MCF 10A (cell line): ENCODE measurements at regions of chr4 and their contacts with region 1.

Region 1: DNA sequence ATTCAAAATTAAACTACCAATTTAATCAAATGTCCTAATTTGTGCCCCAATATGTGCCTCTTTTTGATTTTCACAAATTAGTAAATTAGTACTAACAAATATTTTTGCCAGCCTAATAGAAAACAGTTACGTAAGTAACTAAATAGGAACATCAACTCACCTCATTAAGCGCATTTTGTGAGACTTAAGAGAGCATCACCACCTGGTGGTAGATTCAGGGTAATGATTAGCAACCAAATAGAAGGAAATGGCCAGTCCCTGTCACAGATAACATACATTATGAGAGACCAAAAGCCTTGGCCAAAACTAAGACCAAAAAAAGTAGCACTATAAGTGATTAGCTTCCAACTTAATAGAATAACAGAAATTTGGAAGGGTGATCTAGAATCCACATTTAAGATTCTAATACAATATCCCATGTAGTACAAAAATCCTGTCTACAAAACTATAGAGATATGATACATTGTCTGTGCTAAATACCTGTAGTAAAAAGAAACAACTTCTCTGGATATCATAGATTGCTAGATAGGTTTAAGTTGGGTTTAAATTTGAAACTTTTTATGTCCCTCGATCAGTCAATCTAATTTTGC is 46.7 kb downstream of the C4orf46 start:
- DNase-seq: peak; percentile 79
- H3K4me3 Mint-ChIP-seq: no peak overlapping the region
- H3K27ac Mint-ChIP-seq: no peak overlapping the region
- H3K4me1 Mint-ChIP-seq: peaks cover 6% of the 10 kb centered on the region
- H3K27me3 Mint-ChIP-seq: no peaks in the 10 kb centered on the region
- CTCF ChIP-seq: peak; percentile 72

Region 2: GRCh38 chr4:157992038-157992705 is 632.8 kb before region 1 on chr4:
- CTCF ChIA-PET with region 1: no interaction called
- POLR2A ChIA-PET with region 1: no interaction called
- intact Hi-C with region 1: loop called (anchors 5 kb)
- DNase-seq: peak; percentile 79
- H3K4me3 Mint-ChIP-seq: no peak overlapping the region
- H3K27ac Mint-ChIP-seq: no peak overlapping the region
- H3K4me1 Mint-ChIP-seq: no peaks in the 10 kb centered on the region
- H3K27me3 Mint-ChIP-seq: no peaks in the 10 kb centered on the region
- CTCF ChIP-seq: peak; percentile 72

Region 3: DNA sequence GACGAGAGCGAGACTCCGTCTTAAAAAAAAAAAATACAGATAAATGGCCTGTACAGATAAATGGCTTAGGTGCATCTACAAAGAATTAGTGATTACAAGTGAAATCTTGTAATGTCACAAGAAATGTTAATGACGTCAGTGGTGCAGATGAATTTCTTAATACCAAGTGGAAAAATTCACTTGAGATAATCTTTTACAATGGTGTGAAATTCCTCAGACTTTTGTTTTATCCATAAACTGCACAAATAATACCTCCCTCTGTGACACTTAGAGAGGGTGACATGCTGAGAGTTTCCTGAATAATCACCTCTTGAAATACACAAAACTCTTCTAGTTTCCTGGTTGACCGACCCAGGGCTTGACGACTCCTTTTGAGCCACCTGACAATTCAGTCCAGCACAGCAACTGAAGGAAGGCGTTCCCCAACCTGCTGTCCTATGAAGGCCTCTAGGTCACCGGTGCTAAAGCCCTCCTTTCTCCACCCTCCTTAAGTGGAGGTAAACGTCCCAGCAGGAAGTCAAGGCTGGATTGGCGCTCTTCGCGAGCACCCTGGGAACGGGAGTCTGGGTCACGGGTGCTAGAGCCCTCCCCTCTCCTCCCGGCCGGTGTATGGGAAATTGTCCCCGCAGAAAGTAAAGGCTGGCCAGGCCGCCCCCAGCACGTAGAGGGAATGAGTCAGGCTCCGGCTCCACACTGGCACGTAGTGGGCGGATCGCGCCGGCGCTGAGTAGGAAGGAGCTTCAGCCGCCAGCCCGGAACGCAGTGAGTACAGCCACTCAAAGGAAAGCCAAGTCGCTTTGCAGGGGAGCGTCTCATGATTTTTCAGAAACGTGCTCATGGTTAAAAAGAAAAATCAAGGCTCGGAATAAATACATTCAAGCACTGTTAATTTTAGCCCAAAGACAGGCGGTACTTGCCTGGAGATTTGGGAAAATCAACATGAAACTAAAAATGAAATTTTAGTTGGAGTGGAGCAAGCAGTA is 414.9 kb before region 1 on chr4 and contains the start of gene TMEM144:
- CTCF ChIA-PET with region 1: no interaction called
- POLR2A ChIA-PET with region 1: no interaction called
- intact Hi-C with region 1: no loop called
- DNase-seq: peak; percentile 93
- H3K4me3 Mint-ChIP-seq: peak within 1 kb of the TSS; percentile 81
- H3K27ac Mint-ChIP-seq: peak within 1 kb of the TSS; percentile 82
- H3K4me1 Mint-ChIP-seq: no peaks in the 10 kb centered on the region
- H3K27me3 Mint-ChIP-seq: no peaks in the 10 kb centered on the region
- CTCF ChIP-seq: no peak
- total RNA-seq, gene TMEM144: 4.4 and 6.4 TPM in 2 replicates

Region 4: DNA sequence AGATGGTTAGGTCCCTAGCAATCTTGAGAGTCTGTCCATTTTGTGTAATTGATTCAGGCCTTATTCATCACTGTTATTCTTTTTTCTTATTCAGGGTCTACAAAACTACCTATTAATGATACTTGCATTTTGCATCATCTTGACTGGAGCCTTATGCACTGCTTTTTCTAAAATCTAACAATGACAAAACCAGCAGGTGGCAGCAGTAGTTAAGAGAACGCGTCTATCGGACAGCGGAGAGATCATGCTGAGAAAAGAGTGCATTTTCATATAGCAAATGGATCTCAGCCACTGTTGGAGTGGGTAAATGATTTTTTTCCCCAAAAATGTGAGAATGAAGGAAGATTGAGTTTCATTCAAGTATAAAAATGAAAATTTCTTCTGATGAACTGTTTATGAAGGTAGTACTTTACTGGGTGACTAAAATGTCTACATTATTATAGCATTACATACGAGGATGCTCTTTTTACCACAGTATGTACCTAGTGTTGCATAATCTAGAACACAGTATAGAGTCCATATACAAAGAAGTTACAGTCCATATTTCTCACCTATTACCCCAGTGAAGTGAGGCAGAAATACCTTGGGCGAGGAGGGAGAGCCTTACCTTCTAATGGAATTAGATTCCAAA is 371.5 kb before region 1 on chr4:
- CTCF ChIA-PET with region 1: interaction called, 76 read pairs
- POLR2A ChIA-PET with region 1: interaction called, 3 read pairs
- intact Hi-C with region 1: loop called (anchors 2 kb)
- DNase-seq: peak; percentile 72
- H3K4me3 Mint-ChIP-seq: no peak overlapping the region
- H3K27ac Mint-ChIP-seq: no peak overlapping the region
- H3K4me1 Mint-ChIP-seq: no peaks in the 10 kb centered on the region
- H3K27me3 Mint-ChIP-seq: no peaks in the 10 kb centered on the region
- CTCF ChIP-seq: peak; percentile 62

Region 5: GRCh38 chr4:158302076-158302866 is 322.7 kb before region 1 on chr4:
- CTCF ChIA-PET with region 1: interaction called, 10 read pairs
- POLR2A ChIA-PET with region 1: no interaction called
- intact Hi-C with region 1: no loop called
- DNase-seq: peak; percentile 69
- H3K4me3 Mint-ChIP-seq: no peak overlapping the region
- H3K27ac Mint-ChIP-seq: peak overlapping the region; percentile 84
- H3K4me1 Mint-ChIP-seq: peaks cover 42% of the 10 kb centered on the region
- H3K27me3 Mint-ChIP-seq: no peaks in the 10 kb centered on the region
- CTCF ChIP-seq: no peak

Region 6: GRCh38 chr4:158578476-158578875 is 46.5 kb before region 1 on chr4:
- CTCF ChIA-PET with region 1: interaction called, 4 read pairs
- POLR2A ChIA-PET with region 1: no interaction called
- intact Hi-C with region 1: loop called (anchors 1 kb)
- DNase-seq: peak; percentile 55
- H3K4me3 Mint-ChIP-seq: no peak overlapping the region
- H3K27ac Mint-ChIP-seq: peak overlapping the region; percentile 63
- H3K4me1 Mint-ChIP-seq: peaks cover 9% of the 10 kb centered on the region
- H3K27me3 Mint-ChIP-seq: no peaks in the 10 kb centered on the region
- CTCF ChIP-seq: peak; percentile 48

Region 7: GRCh38 chr4:159498446-159499115 is 873.6 kb after region 1 on chr4:
- CTCF ChIA-PET with region 1: no interaction called
- POLR2A ChIA-PET with region 1: no interaction called
- intact Hi-C with region 1: no loop called
- DNase-seq: no peak
- H3K4me3 Mint-ChIP-seq: no peak overlapping the region
- H3K27ac Mint-ChIP-seq: no peak overlapping the region
- H3K4me1 Mint-ChIP-seq: no peaks in the 10 kb centered on the region
- H3K27me3 Mint-ChIP-seq: no peaks in the 10 kb centered on the region
- CTCF ChIP-seq: no peak